Natural killer cell (primary cell): ENCODE measurements at regions of chr5 and their contacts with region 1.

Region 1: GRCh38 chr5:131281133-131281867 is 17.4 kb downstream of the CDC42SE2 start:
- DNase-seq: peak in 1 of 2 donors; percentile 86
- ATAC-seq: peak; percentile 70 to 88 (median 86)
- H3K4me3 ChIP-seq: peak overlapping the region; percentile 42
- H3K4me3 Mint-ChIP-seq: peak overlapping the region; percentile 81
- H3K27ac ChIP-seq: peak overlapping the region; percentile 89
- H3K27ac Mint-ChIP-seq: peak overlapping the region; percentile 82 to 93
- H3K4me1 ChIP-seq: peaks cover 54% of the 10 kb centered on the region
- H3K4me1 Mint-ChIP-seq: peaks cover 73 to 77% of the 10 kb centered on the region in 2 donors
- H3K27me3 ChIP-seq: no peaks in the 10 kb centered on the region
- H3K27me3 Mint-ChIP-seq: no peaks in the 10 kb centered on the region
- CTCF ChIP-seq: no peak

Region 2: DNA sequence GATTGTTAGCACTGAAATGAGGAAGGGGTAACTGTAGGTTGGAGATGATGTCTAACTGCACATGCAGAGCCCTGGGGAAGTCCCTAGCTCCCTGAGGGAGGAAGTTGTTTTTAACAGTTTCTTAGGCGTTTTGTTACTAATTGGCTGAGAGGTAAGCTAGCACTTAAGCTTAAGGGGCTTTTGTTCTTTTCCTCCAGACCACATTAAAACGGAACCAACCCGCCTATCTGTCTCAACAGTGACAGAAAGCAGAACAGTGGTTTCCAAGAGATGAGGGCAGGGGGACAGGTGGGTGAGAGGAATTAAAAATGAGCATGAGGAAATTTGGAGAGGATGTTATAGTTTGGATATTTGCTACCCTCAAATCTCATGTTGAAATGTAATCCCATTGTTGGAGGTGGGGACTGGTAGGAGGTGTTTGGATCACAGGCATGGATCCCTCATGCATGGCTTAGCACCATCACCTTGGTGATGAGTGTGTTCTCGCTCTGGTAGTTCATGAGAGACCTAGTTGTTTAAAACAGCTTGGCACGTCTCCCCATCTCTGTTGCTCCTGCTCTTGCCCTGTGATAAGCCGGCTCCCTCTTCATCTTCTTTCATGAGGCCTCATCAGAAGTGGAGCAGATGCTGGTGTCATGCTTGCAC is 71.7 kb before region 1 on chr5:
- intact Hi-C with region 1: loop called (anchors 5 kb)
- DNase-seq: peak; percentile 43 to 90
- ATAC-seq: peak; percentile 88 to 98 (median 97)
- H3K4me3 ChIP-seq: peak overlapping the region; percentile 5
- H3K4me3 Mint-ChIP-seq: peak overlapping the region; percentile 77
- H3K27ac ChIP-seq: peak overlapping the region; percentile 88
- H3K27ac Mint-ChIP-seq: peak overlapping the region; percentile 89 to 92
- H3K4me1 ChIP-seq: peaks cover 28% of the 10 kb centered on the region
- H3K4me1 Mint-ChIP-seq: peaks cover 31 to 36% of the 10 kb centered on the region in 2 donors
- H3K27me3 ChIP-seq: no peaks in the 10 kb centered on the region
- H3K27me3 Mint-ChIP-seq: no peaks in the 10 kb centered on the region
- CTCF ChIP-seq: no peak

Region 3: DNA sequence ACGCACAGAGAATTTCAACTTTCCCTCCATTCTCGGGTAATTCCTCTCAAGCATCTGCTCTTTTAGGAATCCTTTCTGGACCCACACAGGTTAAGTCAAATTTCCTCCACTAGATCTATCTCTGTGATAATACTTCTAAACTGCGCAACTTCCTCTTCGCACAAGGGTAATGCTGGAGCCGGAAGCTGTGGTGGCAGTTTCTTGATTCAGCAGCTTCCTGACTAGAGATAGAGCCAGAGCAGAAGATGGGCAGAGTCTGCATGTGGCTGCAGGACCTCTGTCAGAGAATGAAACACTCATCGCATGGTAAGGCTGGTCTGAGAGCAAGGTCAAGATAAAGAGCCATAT is 28.5 kb before region 1 on chr5:
- intact Hi-C with region 1: loop called (anchors 2 kb)
- DNase-seq: peak; percentile 69 to 94
- ATAC-seq: peak; percentile 72 to 89 (median 88)
- H3K4me3 ChIP-seq: peak overlapping the region; percentile 47
- H3K4me3 Mint-ChIP-seq: peak overlapping the region; percentile 91
- H3K27ac ChIP-seq: peak overlapping the region; percentile 99
- H3K27ac Mint-ChIP-seq: peak overlapping the region; percentile 91 to 93
- H3K4me1 ChIP-seq: peaks cover 55% of the 10 kb centered on the region
- H3K4me1 Mint-ChIP-seq: peaks cover 54 to 58% of the 10 kb centered on the region in 2 donors
- H3K27me3 ChIP-seq: no peaks in the 10 kb centered on the region
- H3K27me3 Mint-ChIP-seq: no peaks in the 10 kb centered on the region
- CTCF ChIP-seq: no peak

Region 4: DNA sequence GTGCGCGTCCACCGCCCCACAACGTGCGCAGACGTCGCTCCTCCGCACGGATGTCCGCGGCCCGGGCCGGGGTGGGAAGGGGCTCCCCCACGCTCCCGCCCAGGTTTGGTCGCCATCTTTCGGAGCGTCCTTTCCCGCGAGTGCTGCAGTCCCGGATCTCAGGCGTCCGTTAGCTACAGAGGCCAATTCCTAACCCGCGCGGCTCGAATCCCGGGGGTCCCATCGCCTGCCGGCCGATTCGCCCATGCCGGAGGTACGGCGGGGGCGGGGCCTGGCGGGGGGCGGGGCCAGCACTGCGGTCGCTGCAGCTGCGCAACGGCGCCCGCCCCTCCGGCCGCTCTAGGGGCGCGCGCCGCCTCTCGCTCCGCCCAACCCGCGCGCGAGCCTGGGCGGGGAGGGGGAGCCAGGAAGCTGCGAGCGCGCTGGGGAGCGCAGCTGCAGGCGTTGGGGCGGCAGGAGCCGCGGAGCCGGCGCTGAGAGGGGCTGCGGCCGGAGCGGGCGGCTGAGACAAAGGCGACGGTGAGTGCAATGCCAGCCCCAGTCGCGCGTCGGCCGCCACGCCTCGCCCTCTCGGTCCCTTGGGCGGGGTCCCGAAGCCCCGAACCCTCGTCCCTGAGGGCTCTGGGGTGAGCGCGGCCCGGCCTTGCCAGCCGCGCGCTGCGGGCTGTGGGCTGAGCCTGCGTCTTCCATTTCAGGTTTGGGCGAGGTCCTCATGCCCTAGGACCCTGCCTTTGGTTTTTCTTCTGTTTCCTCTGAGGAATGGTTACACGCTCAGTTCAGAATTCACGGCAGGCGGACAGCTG is 17.5 kb before region 1 on chr5 and contains the start of gene CDC42SE2:
- intact Hi-C with region 1: loop called (anchors 1 kb)
- DNase-seq: peak; percentile 90 to 95
- ATAC-seq: peak; percentile 84 to 97 (median 90)
- H3K4me3 ChIP-seq: peak within 1 kb of the TSS; percentile 95
- H3K4me3 Mint-ChIP-seq: peak within 1 kb of the TSS; percentile 95
- H3K27ac ChIP-seq: peak within 1 kb of the TSS; percentile 97
- H3K27ac Mint-ChIP-seq: peak within 1 kb of the TSS; percentile 76 to 95
- H3K4me1 ChIP-seq: peaks cover 33% of the 10 kb centered on the region
- H3K4me1 Mint-ChIP-seq: peaks cover 33 to 41% of the 10 kb centered on the region in 2 donors
- H3K27me3 ChIP-seq: no peaks in the 10 kb centered on the region
- H3K27me3 Mint-ChIP-seq: no peaks in the 10 kb centered on the region
- CTCF ChIP-seq: no peak
- total RNA-seq, gene CDC42SE2: 140 to 183 (median 166) TPM

Region 5: DNA sequence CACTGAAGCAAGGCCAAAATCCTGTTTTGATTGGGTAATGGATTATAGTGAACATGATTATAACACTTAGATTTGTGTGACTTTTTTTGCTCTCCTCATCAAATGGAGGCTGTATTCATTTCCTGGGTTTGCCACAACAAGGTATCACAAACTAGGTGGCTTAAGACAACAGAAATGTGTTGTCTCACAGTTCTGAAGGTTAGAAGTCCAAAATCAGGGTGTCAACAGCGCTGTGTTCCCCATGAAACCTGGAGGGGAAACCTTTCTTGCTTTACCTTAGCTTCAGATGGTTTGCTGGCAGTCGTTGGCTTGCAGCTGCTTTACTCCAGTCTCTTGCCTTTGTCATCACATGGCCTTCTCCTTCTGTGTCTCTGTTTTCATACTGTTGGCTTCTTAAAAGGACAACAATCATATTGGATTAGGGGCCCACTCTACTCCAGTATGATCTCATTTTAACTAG is 14.9 kb after region 1 on chr5:
- intact Hi-C with region 1: loop called (anchors 2 kb)
- DNase-seq: peak in 1 of 2 donors; percentile 64
- ATAC-seq: peak; percentile 80 to 87 (median 82)
- H3K4me3 ChIP-seq: no peak overlapping the region
- H3K4me3 Mint-ChIP-seq: peak overlapping the region; percentile 68
- H3K27ac ChIP-seq: peak overlapping the region; percentile 41
- H3K27ac Mint-ChIP-seq: peak overlapping the region; percentile 86 to 90
- H3K4me1 ChIP-seq: peaks cover 40% of the 10 kb centered on the region
- H3K4me1 Mint-ChIP-seq: peaks cover 54 to 59% of the 10 kb centered on the region in 2 donors
- H3K27me3 ChIP-seq: no peaks in the 10 kb centered on the region
- H3K27me3 Mint-ChIP-seq: no peaks in the 10 kb centered on the region
- CTCF ChIP-seq: no peak

Region 6: DNA sequence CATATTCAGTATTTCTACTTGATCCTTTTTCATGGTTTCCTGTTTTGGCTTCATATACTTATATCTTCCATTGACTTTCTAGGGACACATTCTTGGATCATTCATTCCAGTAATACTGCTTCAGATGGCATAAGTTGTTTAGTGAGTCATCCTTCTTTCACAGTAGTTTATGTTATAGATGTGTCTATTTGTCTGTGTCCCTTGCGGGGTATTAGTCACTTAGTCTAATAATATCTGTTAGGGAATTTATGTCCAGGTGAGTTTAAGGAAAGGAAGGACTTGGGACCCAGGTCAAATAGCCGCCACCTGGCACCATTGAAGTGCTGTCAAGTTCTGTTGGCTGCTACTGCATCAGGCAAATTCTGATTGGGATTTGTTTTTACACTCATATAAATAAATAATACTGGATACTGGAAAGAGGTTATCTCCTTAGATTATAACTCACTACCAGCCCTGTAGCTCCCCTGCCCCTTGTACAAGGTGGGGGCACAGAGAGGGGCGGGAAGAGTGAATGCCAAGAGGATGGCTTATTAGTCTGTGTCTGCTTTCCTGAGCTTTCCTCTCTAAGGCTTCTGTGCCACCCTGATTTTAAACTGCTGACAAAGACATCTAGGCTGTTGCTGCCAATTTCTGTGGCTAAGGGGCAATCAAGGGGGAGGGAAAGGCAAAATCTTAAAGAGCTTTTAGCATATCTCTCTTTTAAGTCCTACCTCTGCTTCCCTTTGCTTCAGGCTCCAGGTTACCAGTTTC is 47.4 kb after region 1 on chr5:
- intact Hi-C with region 1: loop called (anchors 5 kb)
- DNase-seq: no peak
- ATAC-seq: peak in 1 of 3 donors; percentile 50
- H3K4me3 ChIP-seq: no peak overlapping the region
- H3K4me3 Mint-ChIP-seq: peak overlapping the region; percentile 36
- H3K27ac ChIP-seq: no peak overlapping the region
- H3K27ac Mint-ChIP-seq: peak overlapping the region; percentile 66 to 70
- H3K4me1 ChIP-seq: peaks cover 17% of the 10 kb centered on the region
- H3K4me1 Mint-ChIP-seq: peaks cover 72 to 75% of the 10 kb centered on the region in 2 donors
- H3K27me3 ChIP-seq: no peaks in the 10 kb centered on the region
- H3K27me3 Mint-ChIP-seq: no peaks in the 10 kb centered on the region
- CTCF ChIP-seq: no peak

Region 7: DNA sequence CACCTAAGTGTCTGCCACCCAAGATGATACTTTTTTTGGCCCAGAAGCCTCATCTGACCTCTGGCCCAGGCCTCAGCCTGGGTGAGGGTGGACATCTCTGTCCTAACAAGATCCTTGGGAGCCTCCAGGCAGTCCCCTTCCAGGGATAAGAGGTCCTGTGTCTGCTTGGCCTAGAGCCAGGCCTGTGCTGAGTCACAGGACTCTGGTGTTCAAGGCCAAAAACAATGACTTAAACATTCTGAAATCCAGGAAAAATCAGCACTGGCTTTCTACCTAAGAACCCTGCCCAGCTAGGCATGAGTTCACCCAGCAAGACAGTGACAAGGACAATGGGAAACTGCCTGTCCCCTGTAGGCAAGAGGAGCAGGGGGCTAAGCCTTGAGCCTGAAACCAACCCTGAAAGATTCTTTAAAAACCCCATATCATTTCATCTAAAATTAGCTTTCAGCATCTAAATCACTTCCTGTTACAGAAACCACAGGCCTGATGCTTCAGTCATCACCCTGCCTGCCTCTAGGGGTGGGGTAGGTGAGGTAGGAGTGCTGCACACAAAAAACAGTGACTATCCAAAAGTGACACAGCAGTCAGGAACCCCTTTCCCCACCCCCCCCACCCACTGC is 822.1 kb after region 1 on chr5:
- intact Hi-C with region 1: loop called (anchors 10 kb)
- DNase-seq: peak; percentile 69 to 85
- ATAC-seq: peak; percentile 65 to 88 (median 75)
- H3K4me3 ChIP-seq: no peak overlapping the region
- H3K4me3 Mint-ChIP-seq: peak overlapping the region; percentile 71
- H3K27ac ChIP-seq: peak overlapping the region; percentile 94
- H3K27ac Mint-ChIP-seq: peak overlapping the region; percentile 92 to 94
- H3K4me1 ChIP-seq: peaks cover 66% of the 10 kb centered on the region
- H3K4me1 Mint-ChIP-seq: peaks cover 71 to 74% of the 10 kb centered on the region in 2 donors
- H3K27me3 ChIP-seq: no peaks in the 10 kb centered on the region
- H3K27me3 Mint-ChIP-seq: no peaks in the 10 kb centered on the region
- CTCF ChIP-seq: no peak